Vagina (tissue), 2 donors: ENCODE measurements at regions of chr2 and their contacts with region 1.

Region 1: GRCh38 chr2:85551698-85552678 is 9.3 kb downstream of the GGCX start:
- DNase-seq: no peak
- H3K4me3 ChIP-seq: no peak overlapping the region
- H3K27ac ChIP-seq: peak overlapping the region; percentile 21
- H3K4me1 ChIP-seq: no peaks in the 10 kb centered on the region
- H3K27me3 ChIP-seq: no peaks in the 10 kb centered on the region
- CTCF ChIP-seq: peak; percentile 90 to 96 (median 96)
- POLR2A ChIP-seq: no peak

Region 2: GRCh38 chr2:85421260-85422071 is 130.5 kb before region 1 on chr2:
- intact Hi-C with region 1: loop called (anchors 1 kb)
- DNase-seq: no peak
- H3K4me3 ChIP-seq: no peak overlapping the region
- H3K27ac ChIP-seq: peak overlapping the region; percentile 99
- H3K4me1 ChIP-seq: peaks cover 34% of the 10 kb centered on the region
- H3K27me3 ChIP-seq: no peaks in the 10 kb centered on the region
- CTCF ChIP-seq: no peak
- POLR2A ChIP-seq: no peak

Region 3: GRCh38 chr2:85694052-85695025 is 142.4 kb after region 1 on chr2 and contains the start of gene GNLY:
- intact Hi-C with region 1: no loop called
- DNase-seq: peak in 1 of 2 donors; percentile 29
- H3K4me3 ChIP-seq: no peak within 1 kb of the TSS
- H3K27ac ChIP-seq: no peak within 1 kb of the TSS
- H3K4me1 ChIP-seq: no peaks in the 10 kb centered on the region
- H3K27me3 ChIP-seq: no peaks in the 10 kb centered on the region
- CTCF ChIP-seq: no peak
- POLR2A ChIP-seq: no peak
- total RNA-seq, gene GNLY: 3.2 TPM